ENCODE measurements at regions of chr3 and their contacts with region 1.

Region 1: GRCh38 chr3:148075763-148076716 is 621.7 kb upstream of the AGTR1 start:
- DNase-seq: peak; percentile 57
- ATAC-seq: peak; percentile 71
- H3K4me3 ChIP-seq: no peak overlapping the region
- H3K27ac ChIP-seq: no peak overlapping the region
- H3K4me1 ChIP-seq: no peaks in the 10 kb centered on the region
- H3K27me3 ChIP-seq: no peaks in the 10 kb centered on the region
- CTCF ChIP-seq: peak; percentile 81

Region 2: GRCh38 chr3:146817704-146818103 is 1258.3 kb before region 1 on chr3:
- CTCF ChIA-PET with region 1: no interaction called
- POLR2A ChIA-PET with region 1: no interaction called
- intact Hi-C with region 1: loop called (anchors 1 kb)
- DNase-seq: peak; percentile 63
- ATAC-seq: peak; percentile 78
- H3K4me3 ChIP-seq: no peak overlapping the region
- H3K27ac ChIP-seq: no peak overlapping the region
- H3K4me1 ChIP-seq: no peaks in the 10 kb centered on the region
- H3K27me3 ChIP-seq: peaks cover 39% of the 10 kb centered on the region
- CTCF ChIP-seq: peak; percentile 71

Region 3: DNA sequence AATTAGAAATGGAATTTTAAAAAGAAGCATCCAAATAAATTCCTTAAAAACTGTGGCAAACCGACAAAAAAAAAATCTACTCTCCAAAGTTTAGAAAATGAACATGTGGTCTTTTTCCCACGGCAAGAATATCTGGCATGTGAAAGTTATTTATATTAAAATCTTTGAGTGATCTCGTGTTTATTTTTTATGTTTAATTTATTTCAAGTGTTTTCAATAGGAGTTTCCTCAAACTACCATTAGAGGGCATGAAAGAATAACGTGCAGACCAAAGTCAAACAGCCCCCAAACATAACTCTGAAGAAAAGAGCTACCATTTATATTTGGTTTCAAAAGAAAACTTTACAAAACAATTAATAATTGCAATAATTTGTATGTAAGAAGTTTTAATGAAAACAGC is 956.1 kb before region 1 on chr3:
- CTCF ChIA-PET with region 1: no interaction called
- POLR2A ChIA-PET with region 1: no interaction called
- intact Hi-C with region 1: loop called (anchors 5 kb)
- DNase-seq: peak; percentile 40
- ATAC-seq: no peak
- H3K4me3 ChIP-seq: no peak overlapping the region
- H3K27ac ChIP-seq: no peak overlapping the region
- H3K4me1 ChIP-seq: no peaks in the 10 kb centered on the region
- H3K27me3 ChIP-seq: 0 out of 2 replicates have a peak, but pooled peaks cover 5% of the 10 kb centered on the region
- CTCF ChIP-seq: peak; percentile 70

Region 4: GRCh38 chr3:147838650-147839049 is 237.4 kb before region 1 on chr3:
- CTCF ChIA-PET with region 1: no interaction called
- POLR2A ChIA-PET with region 1: no interaction called
- intact Hi-C with region 1: loop called (anchors 10 kb)
- DNase-seq: peak; percentile 18
- ATAC-seq: no peak
- H3K4me3 ChIP-seq: no peak overlapping the region
- H3K27ac ChIP-seq: no peak overlapping the region
- H3K4me1 ChIP-seq: no peaks in the 10 kb centered on the region
- H3K27me3 ChIP-seq: no peaks in the 10 kb centered on the region
- CTCF ChIP-seq: peak; percentile 39; the same call in 1 of the 2 replicates

Region 5: GRCh38 chr3:147945968-147946519 is 130.0 kb before region 1 on chr3:
- CTCF ChIA-PET with region 1: no interaction called
- POLR2A ChIA-PET with region 1: interaction called, 6 read pairs
- intact Hi-C with region 1: loop called (anchors 1 kb)
- DNase-seq: peak; percentile 61
- ATAC-seq: peak; percentile 76
- H3K4me3 ChIP-seq: peak overlapping the region; percentile 47
- H3K27ac ChIP-seq: peak overlapping the region; percentile 7; the same call in 1 of the 2 replicates
- H3K4me1 ChIP-seq: peaks cover 23% of the 10 kb centered on the region
- H3K27me3 ChIP-seq: no peaks in the 10 kb centered on the region
- CTCF ChIP-seq: peak; percentile 74

Region 6: GRCh38 chr3:148366743-148367410 is 290.8 kb after region 1 on chr3:
- CTCF ChIA-PET with region 1: no interaction called
- POLR2A ChIA-PET with region 1: no interaction called
- intact Hi-C with region 1: loop called (anchors 2 kb)
- DNase-seq: peak; percentile 49
- ATAC-seq: peak; percentile 75
- H3K4me3 ChIP-seq: no peak overlapping the region
- H3K27ac ChIP-seq: no peak overlapping the region
- H3K4me1 ChIP-seq: 0 out of 2 replicates have a peak, but pooled peaks cover 4% of the 10 kb centered on the region
- H3K27me3 ChIP-seq: no peaks in the 10 kb centered on the region
- CTCF ChIP-seq: peak; percentile 58